ENCODE measurements at regions of chr12 and their contacts with region 1.

Region 1: GRCh38 chr12:114799574-114800487 is 115.9 kb upstream of the TBX3 start:
- DNase-seq: peak; percentile 89

Region 2: GRCh38 chr12:114704096-114704495 is 95.7 kb before region 1 on chr12:
- intact Hi-C with region 1: loop called (anchors 5 kb)
- DNase-seq: no peak

Region 3: GRCh38 chr12:114726092-114726710 is 73.6 kb before region 1 on chr12:
- intact Hi-C with region 1: loop called (anchors 1 kb)
- DNase-seq: peak; percentile 79